Heart right ventricle (tissue), 16 donors: ENCODE measurements at regions of chr12 and their contacts with region 1.

Region 1: DNA sequence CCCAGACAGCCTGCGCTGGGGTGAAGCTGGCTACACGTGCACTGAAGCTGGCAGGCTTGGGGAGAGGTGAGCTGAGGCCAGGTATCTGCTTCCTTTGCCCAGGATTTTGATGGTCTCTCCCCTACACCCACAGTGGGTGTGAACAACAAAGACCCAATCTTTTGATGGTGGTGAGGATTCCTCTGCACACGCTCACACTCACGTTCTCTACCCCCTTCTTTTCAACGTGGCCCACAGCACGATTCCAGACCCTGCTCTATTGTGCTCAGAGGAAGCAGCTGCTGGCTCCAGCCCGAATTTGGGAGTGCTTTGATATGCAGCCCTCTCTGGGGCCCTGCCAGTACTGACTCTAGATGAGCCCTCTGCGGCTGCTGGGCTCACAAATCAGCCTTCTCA is 4.9 kb downstream of the CD9 start:
- DNase-seq: peak; percentile 71 to 79
- ATAC-seq: peak; percentile 65 to 80 (median 72)
- H3K4me3 ChIP-seq: peak overlapping the region in 6 of 10 donors; percentile 7 to 99 (median 52)
- H3K27ac ChIP-seq: peak overlapping the region; percentile 55 to 99 (median 92)
- H3K4me1 ChIP-seq: peaks cover 28 to 99% (median 69%) of the 10 kb centered on the region in 9 donors
- H3K27me3 ChIP-seq: peaks cover 0 to 22% (median 0%) of the 10 kb centered on the region in 7 donors
- CTCF ChIP-seq: peak in 1 of 9 donors; percentile 13

Region 2: GRCh38 chr12:6224550-6224949 is 19.4 kb after region 1 on chr12:
- intact Hi-C with region 1: loop called in 2 of 10 experiments (anchors 2 kb)
- DNase-seq: peak in 1 of 2 donors; percentile 51
- ATAC-seq: peak in 2 of 8 donors; percentile 3 to 46
- H3K4me3 ChIP-seq: no peak overlapping the region
- H3K27ac ChIP-seq: peak overlapping the region; percentile 57 to 96 (median 88)
- H3K4me1 ChIP-seq: peaks cover 61 to 100% (median 93%) of the 10 kb centered on the region in 9 donors
- H3K27me3 ChIP-seq: no peaks in the 10 kb centered on the region
- CTCF ChIP-seq: no peak